ENCODE measurements at regions of chr11 and their contacts with region 1.

Region 1: GRCh38 chr11:75142714-75143419 is 8.0 kb upstream of the SLCO2B1 start:
- DNase-seq: peak in 1 of 2 experiments; percentile 27
- H3K4me3 ChIP-seq: no peak overlapping the region
- H3K27ac ChIP-seq: no peak overlapping the region
- H3K4me1 ChIP-seq: no peaks in the 10 kb centered on the region
- H3K27me3 ChIP-seq: no peaks in the 10 kb centered on the region
- CTCF ChIP-seq: no peak
- EP300 ChIP-seq: no peak
- POLR2A ChIP-seq: no peak
- RAD21 ChIP-seq: no peak

Region 2: GRCh38 chr11:74909385-74909784 is 233.5 kb before region 1 on chr11:
- CTCF ChIA-PET with region 1: no interaction called
- POLR2A ChIA-PET with region 1: no interaction called
- DNase-seq: no peak
- H3K4me3 ChIP-seq: no peak overlapping the region
- H3K27ac ChIP-seq: no peak overlapping the region
- H3K4me1 ChIP-seq: no peaks in the 10 kb centered on the region
- H3K27me3 ChIP-seq: no peaks in the 10 kb centered on the region
- CTCF ChIP-seq: no peak
- EP300 ChIP-seq: no peak
- POLR2A ChIP-seq: no peak
- RAD21 ChIP-seq: no peak

Region 3: DNA sequence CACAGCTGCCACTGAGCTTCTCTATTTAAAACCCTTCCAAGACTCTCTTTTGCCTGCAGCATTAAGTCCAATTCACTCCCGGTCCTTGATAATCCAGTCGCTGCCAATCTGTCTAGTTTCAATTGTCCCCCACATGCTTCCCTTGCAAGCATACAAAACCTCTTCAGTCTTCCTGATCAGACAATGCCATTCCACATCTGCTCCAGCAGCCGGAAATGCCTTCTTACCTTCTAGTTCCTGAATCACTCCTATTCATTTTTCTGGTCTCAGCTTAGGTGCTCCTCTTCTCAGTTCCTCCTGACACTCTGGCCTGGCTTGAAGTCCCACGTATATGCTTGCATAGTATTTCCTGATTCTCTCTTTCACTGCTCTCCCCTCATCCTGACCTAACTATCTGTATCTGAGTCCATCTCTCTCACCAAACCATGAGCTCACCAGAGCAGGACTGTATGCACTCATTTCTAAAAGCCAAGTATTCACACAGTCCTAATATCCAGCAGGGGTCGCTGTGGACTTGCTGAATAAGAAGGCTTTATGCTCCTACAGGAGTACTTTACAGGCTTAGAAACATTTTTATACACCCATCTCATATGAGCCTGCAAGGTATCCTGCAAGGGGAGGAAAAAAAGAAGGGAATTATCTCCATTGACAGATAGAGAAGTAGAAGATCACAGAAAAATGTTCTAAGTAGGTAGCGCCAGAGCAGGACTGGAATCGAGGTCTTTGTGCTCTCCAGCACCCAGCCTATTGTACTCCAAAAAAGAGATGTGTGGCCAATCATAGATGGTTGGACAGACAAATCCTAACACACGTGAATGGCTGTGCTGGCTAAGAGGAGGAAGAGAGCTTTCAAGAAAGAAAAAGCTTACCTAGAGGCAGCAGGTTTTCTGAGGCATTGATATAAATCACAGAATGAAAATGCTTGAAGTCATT is 213.2 kb before region 1 on chr11:
- CTCF ChIA-PET with region 1: interaction called, 27 read pairs
- POLR2A ChIA-PET with region 1: no interaction called
- DNase-seq: peak in 1 of 2 experiments; percentile 66
- H3K4me3 ChIP-seq: no peak overlapping the region
- H3K27ac ChIP-seq: no peak overlapping the region
- H3K4me1 ChIP-seq: no peaks in the 10 kb centered on the region
- H3K27me3 ChIP-seq: no peaks in the 10 kb centered on the region
- CTCF ChIP-seq: peak in 2 of 3 experiments; percentile 77 to 81; a peak in 3 of 4 replicates
- EP300 ChIP-seq: no peak
- POLR2A ChIP-seq: no peak
- RAD21 ChIP-seq: peak; percentile 82 to 90

Region 4: DNA sequence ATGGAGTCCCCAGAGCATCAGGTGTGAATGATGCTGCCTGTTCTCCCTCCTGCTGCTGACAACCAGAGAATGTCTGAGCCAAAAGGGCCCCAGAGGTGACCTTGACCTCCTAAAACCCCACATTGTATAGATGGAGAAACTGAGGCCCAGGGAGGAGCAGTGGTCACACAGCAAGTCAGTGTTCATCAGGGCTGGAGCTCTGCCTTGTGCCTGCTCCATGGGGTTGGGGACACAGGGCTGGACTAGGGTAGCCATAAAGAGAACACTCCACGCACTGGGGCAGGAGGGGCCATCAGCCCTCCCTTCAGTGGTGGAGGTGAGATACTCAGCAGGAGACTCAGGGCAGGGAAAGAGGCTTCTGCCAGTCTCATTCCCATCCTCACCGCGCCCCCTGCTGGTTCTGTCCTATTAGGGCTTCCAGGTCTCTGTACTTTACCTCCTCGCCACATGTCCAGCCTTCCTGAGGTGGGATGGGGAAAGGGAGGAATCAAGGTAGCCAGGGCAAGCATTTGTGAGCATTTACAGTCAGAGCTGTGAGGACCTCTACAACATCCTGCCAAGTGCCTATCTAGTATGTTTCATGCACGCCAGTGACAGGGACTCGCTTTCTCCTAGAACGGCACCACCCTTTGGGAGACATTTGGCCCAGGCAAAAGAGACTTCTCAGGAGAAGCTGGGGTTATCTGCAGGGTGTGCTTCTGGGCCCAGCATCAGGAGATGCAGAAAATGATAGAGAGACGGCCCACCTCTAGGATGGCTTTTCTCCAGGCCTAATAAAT is 110.9 kb before region 1 on chr11:
- CTCF ChIA-PET with region 1: interaction called, 142 read pairs
- POLR2A ChIA-PET with region 1: no interaction called
- DNase-seq: peak; percentile 39 to 93
- H3K4me3 ChIP-seq: no peak overlapping the region
- H3K27ac ChIP-seq: no peak overlapping the region
- H3K4me1 ChIP-seq: 0 out of 7 replicates have a peak, but pooled peaks cover 0 to 2% (median 0%) of the 10 kb centered on the region in 4 experiments
- H3K27me3 ChIP-seq: no peaks in the 10 kb centered on the region
- CTCF ChIP-seq: peak; percentile 79 to 92 (median 81)
- EP300 ChIP-seq: no peak
- POLR2A ChIP-seq: no peak
- RAD21 ChIP-seq: peak; percentile 62 to 70

Region 5: GRCh38 chr11:75113030-75113429 is 29.8 kb before region 1 on chr11:
- CTCF ChIA-PET with region 1: interaction called, 14 read pairs
- POLR2A ChIA-PET with region 1: no interaction called
- DNase-seq: no peak
- H3K4me3 ChIP-seq: no peak overlapping the region
- H3K27ac ChIP-seq: no peak overlapping the region
- H3K4me1 ChIP-seq: no peaks in the 10 kb centered on the region
- H3K27me3 ChIP-seq: no peaks in the 10 kb centered on the region
- CTCF ChIP-seq: no peak
- EP300 ChIP-seq: no peak
- POLR2A ChIP-seq: no peak
- RAD21 ChIP-seq: no peak

Region 6: GRCh38 chr11:75182669-75183068 is 39.8 kb after region 1 on chr11:
- CTCF ChIA-PET with region 1: interaction called, 24 read pairs
- POLR2A ChIA-PET with region 1: no interaction called
- DNase-seq: no peak
- H3K4me3 ChIP-seq: no peak overlapping the region
- H3K27ac ChIP-seq: no peak overlapping the region
- H3K4me1 ChIP-seq: peaks cover 0 to 2% (median 0%) of the 10 kb centered on the region in 4 experiments; a peak in 1 of 7 replicates
- H3K27me3 ChIP-seq: no peaks in the 10 kb centered on the region
- CTCF ChIP-seq: no peak
- EP300 ChIP-seq: no peak
- POLR2A ChIP-seq: no peak
- RAD21 ChIP-seq: no peak

Region 7: GRCh38 chr11:75241036-75241905 is 98.4 kb after region 1 on chr11:
- CTCF ChIA-PET with region 1: interaction called, 952 read pairs
- POLR2A ChIA-PET with region 1: no interaction called
- DNase-seq: peak; percentile 63 to 97
- H3K4me3 ChIP-seq: peak overlapping the region; percentile 37 to 63 (median 44)
- H3K27ac ChIP-seq: no peak overlapping the region
- H3K4me1 ChIP-seq: peaks cover 5 to 19% (median 10%) of the 10 kb centered on the region in 4 experiments
- H3K27me3 ChIP-seq: peaks cover 24 to 50% (median 40%) of the 10 kb centered on the region in 4 experiments
- CTCF ChIP-seq: peak; percentile 94 to 99 (median 98)
- EP300 ChIP-seq: 0 out of 3 replicates have a peak, but pooled peaks of 1 of the 2 experiments have one; percentile 70
- POLR2A ChIP-seq: peak in 1 of 2 experiments; percentile 55; a peak in 1 of 3 replicates
- RAD21 ChIP-seq: peak; percentile 23 to 75; a peak in 3 of 4 replicates